Posterior vena cava (tissue), 2 donors: ENCODE measurements at regions of chr12 and their contacts with region 1.

Region 1: DNA sequence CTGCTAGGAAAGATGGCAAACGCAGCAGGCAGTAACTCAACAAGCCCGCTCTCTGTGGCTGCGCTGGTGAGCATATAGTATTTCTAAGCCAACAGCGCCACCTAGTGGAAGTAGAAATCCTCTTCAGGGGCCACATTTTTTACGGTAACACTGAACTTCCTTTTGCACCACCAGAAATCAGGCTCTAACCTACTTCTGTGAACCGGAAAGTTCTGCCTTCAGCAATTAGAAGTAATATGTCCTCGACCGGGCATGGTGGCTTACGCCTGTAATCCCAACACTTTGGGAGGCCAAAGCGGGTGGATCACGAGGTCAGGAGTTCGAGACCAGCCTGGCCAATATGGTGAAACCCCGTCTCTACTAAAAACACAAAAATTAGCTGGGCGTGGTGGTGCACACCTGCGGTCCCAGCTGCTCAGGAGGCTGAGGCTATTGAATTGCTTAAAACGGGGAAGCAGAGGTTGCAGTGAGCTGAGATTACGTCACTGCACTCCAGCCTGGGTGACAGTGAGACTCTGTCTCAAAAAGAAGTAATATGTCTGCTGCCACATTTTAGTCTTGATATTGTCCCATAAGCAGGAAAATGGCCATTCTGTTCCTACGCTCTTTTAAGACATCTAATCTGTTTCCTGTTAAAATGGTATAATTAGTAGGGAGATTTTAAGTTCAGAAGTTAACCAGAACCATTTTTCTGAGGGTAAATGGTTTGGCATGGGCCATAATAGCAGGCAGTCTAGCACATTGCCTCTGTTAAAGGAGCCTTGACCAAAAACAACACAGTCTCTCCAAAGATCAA is 26.8 kb downstream of the APOBEC1 start:
- DNase-seq: peak; percentile 86

Region 2: DNA sequence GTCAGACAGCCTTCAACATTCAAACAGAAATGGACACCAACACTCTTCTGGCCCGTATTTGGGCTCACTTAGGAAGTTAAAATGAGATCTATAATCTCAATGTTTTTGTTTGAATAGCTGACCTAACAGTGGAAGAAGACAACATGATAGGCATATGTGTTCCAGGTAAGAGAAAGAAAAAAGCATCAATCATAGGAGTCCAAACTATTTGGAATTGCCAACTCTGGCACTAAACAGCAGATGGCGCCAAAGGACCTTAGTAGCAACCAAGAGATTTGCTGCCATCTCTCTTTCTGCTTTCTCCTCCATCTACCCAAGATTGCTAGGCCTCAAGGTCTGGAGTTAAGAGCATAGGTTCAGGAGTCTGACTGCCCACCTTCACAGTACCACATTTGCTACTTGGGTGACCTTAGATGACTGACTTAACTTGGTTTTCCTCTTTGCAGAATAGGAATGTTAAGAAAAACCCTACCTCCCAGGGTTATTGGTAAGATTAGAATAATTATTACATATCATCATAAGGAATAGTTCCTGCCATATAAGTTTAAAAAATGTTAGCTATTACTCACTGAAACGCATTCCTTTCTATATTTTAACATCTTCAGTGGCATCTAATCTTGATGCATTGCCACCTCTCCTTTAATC is 419.2 kb before region 1 on chr12:
- intact Hi-C with region 1: loop called (anchors 5 kb)
- DNase-seq: peak; percentile 81